Caco-2 (cell line): ENCODE measurements at regions of chr17 and their contacts with region 1.

Region 1: DNA sequence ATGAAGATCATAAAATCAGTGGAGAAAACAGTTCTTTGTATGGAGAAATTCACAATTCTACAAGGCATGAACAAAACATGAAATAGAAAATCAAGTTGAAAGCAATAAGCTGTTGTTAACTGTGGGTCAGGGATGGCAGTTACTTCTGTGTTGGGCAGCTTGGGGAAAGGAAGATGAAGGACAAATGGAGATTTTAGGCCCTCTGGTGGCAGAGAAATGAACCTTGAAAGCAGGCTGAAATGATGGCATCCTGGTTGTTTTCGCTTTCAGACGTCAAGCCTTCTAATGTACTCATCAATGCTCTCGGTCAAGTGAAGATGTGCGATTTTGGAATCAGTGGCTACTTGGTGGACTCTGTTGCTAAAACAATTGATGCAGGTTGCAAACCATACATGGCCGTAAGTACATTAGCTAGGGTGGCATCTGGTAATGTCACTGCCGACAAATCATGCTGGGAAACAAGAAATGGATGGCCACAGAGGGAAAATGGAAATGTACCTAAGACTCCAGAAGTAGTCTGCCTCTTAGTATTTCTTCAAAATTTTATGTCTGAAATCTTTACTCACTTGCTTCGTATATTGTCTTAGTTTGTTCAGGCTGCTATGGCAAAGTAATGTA is 108.9 kb downstream of the MAP2K6 start:
- DNase-seq: peak in 1 of 2 experiments; percentile 45
- H3K4me3 ChIP-seq: no peak overlapping the region
- H3K4me3 Mint-ChIP-seq: no peak overlapping the region
- H3K27ac Mint-ChIP-seq: no peak overlapping the region
- H3K4me1 ChIP-seq: no peaks in the 10 kb centered on the region
- H3K4me1 Mint-ChIP-seq: no peaks in the 10 kb centered on the region
- H3K27me3 ChIP-seq: no peaks in the 10 kb centered on the region
- H3K27me3 Mint-ChIP-seq: no peaks in the 10 kb centered on the region
- CTCF ChIP-seq: peak; percentile 72 to 73

Region 2: DNA sequence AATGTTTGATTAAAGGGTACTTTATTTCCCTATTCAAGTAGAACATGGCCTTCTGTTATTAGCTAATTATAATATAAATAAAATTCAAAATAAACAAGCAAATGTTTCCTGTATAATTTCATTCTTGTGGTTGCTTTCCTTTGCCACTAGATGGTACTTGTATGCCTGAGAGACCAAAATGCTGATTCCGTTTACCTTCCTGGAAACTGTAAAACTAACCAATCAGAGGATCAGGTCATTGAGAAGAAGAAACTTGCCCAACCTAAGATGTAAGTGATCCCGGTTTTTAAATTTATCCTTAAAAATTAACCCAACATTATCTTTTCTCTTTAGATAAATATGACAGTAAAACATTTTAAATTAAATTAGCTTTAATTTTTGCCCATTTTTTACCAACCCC is 188.3 kb before region 1 on chr17:
- CTCF ChIA-PET with region 1: interaction called, 3 read pairs
- POLR2A ChIA-PET with region 1: no interaction called
- intact Hi-C with region 1: loop called (anchors 1 kb)
- DNase-seq: peak in 1 of 2 experiments; percentile 23
- H3K4me3 ChIP-seq: no peak overlapping the region
- H3K4me3 Mint-ChIP-seq: peak overlapping the region; percentile 46
- H3K27ac Mint-ChIP-seq: no peak overlapping the region
- H3K4me1 ChIP-seq: no peaks in the 10 kb centered on the region
- H3K4me1 Mint-ChIP-seq: peaks cover 6% of the 10 kb centered on the region
- H3K27me3 ChIP-seq: no peaks in the 10 kb centered on the region
- H3K27me3 Mint-ChIP-seq: peaks cover 15% of the 10 kb centered on the region
- CTCF ChIP-seq: peak; percentile 51 to 53

Region 3: GRCh38 chr17:69388822-69389442 is 134.4 kb before region 1 on chr17:
- CTCF ChIA-PET with region 1: no interaction called
- POLR2A ChIA-PET with region 1: no interaction called
- intact Hi-C with region 1: loop called (anchors 10 kb)
- DNase-seq: no peak
- H3K4me3 ChIP-seq: no peak overlapping the region
- H3K4me3 Mint-ChIP-seq: no peak overlapping the region
- H3K27ac Mint-ChIP-seq: no peak overlapping the region
- H3K4me1 ChIP-seq: peaks cover 14% of the 10 kb centered on the region
- H3K4me1 Mint-ChIP-seq: peaks cover 12% of the 10 kb centered on the region
- H3K27me3 ChIP-seq: no peaks in the 10 kb centered on the region
- H3K27me3 Mint-ChIP-seq: no peaks in the 10 kb centered on the region
- CTCF ChIP-seq: no peak

Region 4: GRCh38 chr17:69501591-69502468 is 21.5 kb before region 1 on chr17:
- CTCF ChIA-PET with region 1: interaction called, 6 read pairs
- POLR2A ChIA-PET with region 1: no interaction called
- intact Hi-C with region 1: loop called (anchors 1 kb)
- DNase-seq: peak; percentile 62
- H3K4me3 ChIP-seq: peak overlapping the region; percentile 26
- H3K4me3 Mint-ChIP-seq: peak overlapping the region; percentile 52
- H3K27ac Mint-ChIP-seq: peak overlapping the region; percentile 17
- H3K4me1 ChIP-seq: peaks cover 4% of the 10 kb centered on the region; the same call in 1 of the 2 replicates
- H3K4me1 Mint-ChIP-seq: peaks cover 21% of the 10 kb centered on the region
- H3K27me3 ChIP-seq: no peaks in the 10 kb centered on the region
- H3K27me3 Mint-ChIP-seq: no peaks in the 10 kb centered on the region
- CTCF ChIP-seq: no peak

Region 5: DNA sequence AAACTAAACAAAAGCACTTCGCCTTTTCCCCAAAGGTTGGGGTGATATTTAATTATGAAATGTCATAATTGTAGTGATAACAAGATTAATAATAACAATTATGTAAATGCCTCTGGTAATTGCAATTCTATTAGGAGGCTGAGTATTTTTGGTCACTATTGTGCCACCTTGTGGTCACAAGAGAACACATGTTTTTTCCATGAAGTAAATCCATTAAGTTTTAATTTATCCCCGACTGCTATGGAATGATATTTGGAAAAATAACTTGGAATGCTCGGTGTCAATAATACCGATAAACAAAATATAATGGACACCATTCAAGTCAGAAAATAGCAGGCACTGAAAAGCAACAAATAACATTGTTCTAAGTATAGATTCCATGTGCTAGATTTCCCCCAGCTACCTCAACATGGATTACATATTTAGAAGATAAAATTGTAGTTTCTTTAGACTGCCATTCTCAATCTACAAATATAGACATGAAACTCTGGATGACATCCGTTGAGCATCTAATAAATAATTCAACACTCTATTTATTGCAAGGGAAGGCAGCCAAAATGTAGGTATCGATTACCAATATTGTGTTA is 621.0 kb after region 1 on chr17:
- CTCF ChIA-PET with region 1: no interaction called
- POLR2A ChIA-PET with region 1: no interaction called
- intact Hi-C with region 1: loop called (anchors 2 kb)
- DNase-seq: no peak
- H3K4me3 ChIP-seq: no peak overlapping the region
- H3K4me3 Mint-ChIP-seq: no peak overlapping the region
- H3K27ac Mint-ChIP-seq: no peak overlapping the region
- H3K4me1 ChIP-seq: no peaks in the 10 kb centered on the region
- H3K4me1 Mint-ChIP-seq: no peaks in the 10 kb centered on the region
- H3K27me3 ChIP-seq: no peaks in the 10 kb centered on the region
- H3K27me3 Mint-ChIP-seq: peaks cover 9% of the 10 kb centered on the region
- CTCF ChIP-seq: peak; percentile 52 to 71

Region 6: GRCh38 chr17:70622368-70623260 is 1099.3 kb after region 1 on chr17:
- CTCF ChIA-PET with region 1: no interaction called
- POLR2A ChIA-PET with region 1: no interaction called
- intact Hi-C with region 1: loop called (anchors 1 kb)
- DNase-seq: peak; percentile 50 to 56
- H3K4me3 ChIP-seq: no peak overlapping the region
- H3K4me3 Mint-ChIP-seq: no peak overlapping the region
- H3K27ac Mint-ChIP-seq: no peak overlapping the region
- H3K4me1 ChIP-seq: no peaks in the 10 kb centered on the region
- H3K4me1 Mint-ChIP-seq: no peaks in the 10 kb centered on the region
- H3K27me3 ChIP-seq: no peaks in the 10 kb centered on the region
- H3K27me3 Mint-ChIP-seq: peaks cover 16% of the 10 kb centered on the region
- CTCF ChIP-seq: peak; percentile 67 to 80